Activated CD8-positive, alpha-beta T cell treated with anti-CD3 and anti-CD28 coated beads, Interleukin-2, amount 10 ng/mL, durations not matched to agents 7 days and 5 days (primary cell): ENCODE measurements at regions of chr19 and their contacts with region 1.

Region 1: DNA sequence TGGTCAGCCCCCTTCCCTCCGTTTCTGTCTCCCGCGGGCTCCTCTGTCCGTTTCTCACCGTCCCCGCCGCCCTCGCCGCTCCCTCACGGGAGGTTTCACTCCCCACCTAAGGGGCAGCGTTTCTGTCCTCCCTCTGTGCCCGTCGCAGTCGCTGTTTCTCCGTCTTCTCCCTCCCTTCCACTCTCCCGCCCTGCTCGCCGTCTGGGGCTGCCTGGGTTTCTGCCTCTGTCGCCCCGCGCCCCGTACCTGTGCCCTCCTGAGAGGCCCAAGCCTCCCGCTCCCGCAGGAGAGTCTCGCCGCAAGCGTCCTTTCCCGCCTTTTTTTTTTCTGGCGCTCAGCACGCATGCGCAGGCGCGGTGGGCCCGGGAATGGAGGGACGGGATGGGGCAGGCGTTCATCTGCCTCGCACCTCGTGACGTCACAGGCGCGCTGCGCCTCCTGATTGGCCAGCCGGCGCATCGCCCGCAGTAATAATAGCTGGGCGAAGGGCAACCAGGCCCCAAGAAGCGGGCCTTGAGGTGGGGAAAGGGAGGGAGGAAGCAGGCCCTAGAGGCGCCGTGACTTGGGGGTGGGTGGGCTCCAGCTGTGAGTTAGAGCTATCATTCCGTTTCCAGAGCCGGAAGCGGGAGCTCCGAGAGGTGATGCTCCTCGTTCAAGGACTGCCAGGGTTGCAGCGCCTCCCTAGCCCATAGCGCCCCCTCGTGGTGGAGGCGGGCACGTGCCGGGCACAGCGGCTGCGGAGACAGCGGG is 15.4 kb downstream of the SSC5D start:
- DNase-seq: peak; percentile 93
- ATAC-seq: peak; percentile 94
- H3K4me3 Mint-ChIP-seq: peak overlapping the region; percentile 70
- H3K27ac Mint-ChIP-seq: peak overlapping the region; percentile 85
- H3K4me1 Mint-ChIP-seq: peaks cover 19% of the 10 kb centered on the region
- H3K27me3 Mint-ChIP-seq: no peaks in the 10 kb centered on the region

Region 2: GRCh38 chr19:55258828-55259539 is 244.7 kb before region 1 on chr19 and contains the start of gene PPP6R1:
- CTCF ChIA-PET with region 1: interaction called, 17 read pairs
- POLR2A ChIA-PET with region 1: no interaction called
- DNase-seq: peak; percentile 95
- ATAC-seq: peak; percentile 76
- H3K4me3 Mint-ChIP-seq: peak within 1 kb of the TSS; percentile 91
- H3K27ac Mint-ChIP-seq: peak within 1 kb of the TSS; percentile 100
- H3K4me1 Mint-ChIP-seq: peaks cover 26% of the 10 kb centered on the region
- H3K27me3 Mint-ChIP-seq: no peaks in the 10 kb centered on the region
- total RNA-seq, gene PPP6R1: 256 to 265 TPM

Region 3: DNA sequence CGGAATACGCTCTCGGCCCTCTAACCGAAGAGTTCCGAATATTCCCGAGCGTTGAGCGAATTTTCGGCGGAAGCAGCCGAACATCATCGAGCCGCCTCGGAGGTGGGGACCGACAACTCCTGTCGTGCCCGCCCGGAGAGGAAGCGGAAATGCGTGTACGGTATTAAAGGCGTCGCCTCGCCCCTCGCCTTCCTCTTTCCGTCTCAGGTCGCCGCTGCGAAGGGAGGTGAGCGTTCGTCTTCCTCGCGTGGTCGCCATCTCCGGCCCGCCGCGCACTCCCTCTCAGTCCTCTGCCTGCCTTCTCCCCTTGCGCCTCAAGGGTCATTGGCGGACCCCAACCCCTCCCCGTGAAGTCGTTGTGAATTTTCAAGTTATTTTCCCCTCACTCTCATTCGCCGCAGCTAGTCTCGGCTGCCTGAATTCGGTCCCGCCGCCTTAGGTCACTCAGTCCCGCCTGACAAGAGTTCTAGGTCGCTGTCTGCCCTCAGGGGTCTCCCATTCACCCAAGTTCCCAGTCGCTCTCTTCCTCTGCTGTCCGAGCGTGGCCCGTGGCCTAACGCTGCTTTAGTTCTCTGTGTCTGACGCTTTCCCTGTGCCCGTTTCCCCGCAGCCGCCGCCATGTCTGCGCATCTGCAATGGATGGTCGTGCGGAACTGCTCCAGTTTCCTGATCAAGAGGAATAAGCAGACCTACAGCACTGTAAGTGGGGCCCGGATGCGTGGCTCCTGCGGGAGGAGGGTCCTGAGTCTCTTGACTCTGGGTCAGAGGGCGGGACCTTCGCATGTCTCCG is 117.7 kb before region 1 on chr19 and contains the start of gene RPL28:
- CTCF ChIA-PET with region 1: interaction called, 13 read pairs
- POLR2A ChIA-PET with region 1: no interaction called
- DNase-seq: peak; percentile 99
- ATAC-seq: peak; percentile 73
- H3K4me3 Mint-ChIP-seq: peak within 1 kb of the TSS; percentile 100
- H3K27ac Mint-ChIP-seq: peak within 1 kb of the TSS; percentile 99
- H3K4me1 Mint-ChIP-seq: peaks cover 68% of the 10 kb centered on the region
- H3K27me3 Mint-ChIP-seq: no peaks in the 10 kb centered on the region
- total RNA-seq, gene RPL28: 2,948 to 3,082 TPM

Region 4: DNA sequence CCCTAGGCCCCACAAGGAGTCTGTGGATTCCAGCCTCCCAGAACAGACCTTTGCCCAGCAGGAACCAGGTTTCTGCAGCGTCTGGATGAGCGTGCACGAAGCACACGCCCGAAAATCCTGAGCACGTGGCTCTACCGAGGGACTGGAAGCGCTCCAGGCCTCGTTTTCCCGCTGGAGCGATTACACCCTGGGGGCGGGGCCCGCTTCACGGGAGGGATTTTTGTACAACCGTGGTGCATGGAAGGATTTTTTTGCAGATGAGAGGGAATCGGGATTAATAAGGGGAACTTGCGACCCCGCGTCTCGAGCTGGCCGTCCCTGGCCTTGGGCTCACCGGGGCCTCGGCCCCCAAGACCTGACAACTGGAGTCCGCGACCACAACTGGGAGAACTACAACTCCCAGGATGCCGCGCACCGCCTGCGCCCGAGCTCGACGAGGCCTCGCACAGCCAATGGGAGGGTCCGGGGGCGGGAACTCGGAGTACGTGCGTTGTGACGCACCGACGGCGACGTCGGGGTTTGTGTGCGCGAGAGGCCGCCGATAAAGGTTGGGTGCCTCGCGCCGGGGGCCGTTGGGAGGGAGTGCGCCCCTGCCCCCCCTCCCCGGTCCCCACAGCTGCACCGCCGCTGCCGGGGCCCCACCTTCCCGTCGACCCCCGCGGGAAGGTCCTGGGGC is 27.4 kb before region 1 on chr19 and contains the start of gene ZNF628:
- CTCF ChIA-PET with region 1: interaction called, 48 read pairs
- POLR2A ChIA-PET with region 1: no interaction called
- DNase-seq: peak; percentile 99
- ATAC-seq: peak; percentile 92
- H3K4me3 Mint-ChIP-seq: peak within 1 kb of the TSS; percentile 91
- H3K27ac Mint-ChIP-seq: peak within 1 kb of the TSS; percentile 94
- H3K4me1 Mint-ChIP-seq: peaks cover 45% of the 10 kb centered on the region
- H3K27me3 Mint-ChIP-seq: no peaks in the 10 kb centered on the region
- total RNA-seq, gene ZNF628: 10.2 to 11.6 TPM

Region 5: DNA sequence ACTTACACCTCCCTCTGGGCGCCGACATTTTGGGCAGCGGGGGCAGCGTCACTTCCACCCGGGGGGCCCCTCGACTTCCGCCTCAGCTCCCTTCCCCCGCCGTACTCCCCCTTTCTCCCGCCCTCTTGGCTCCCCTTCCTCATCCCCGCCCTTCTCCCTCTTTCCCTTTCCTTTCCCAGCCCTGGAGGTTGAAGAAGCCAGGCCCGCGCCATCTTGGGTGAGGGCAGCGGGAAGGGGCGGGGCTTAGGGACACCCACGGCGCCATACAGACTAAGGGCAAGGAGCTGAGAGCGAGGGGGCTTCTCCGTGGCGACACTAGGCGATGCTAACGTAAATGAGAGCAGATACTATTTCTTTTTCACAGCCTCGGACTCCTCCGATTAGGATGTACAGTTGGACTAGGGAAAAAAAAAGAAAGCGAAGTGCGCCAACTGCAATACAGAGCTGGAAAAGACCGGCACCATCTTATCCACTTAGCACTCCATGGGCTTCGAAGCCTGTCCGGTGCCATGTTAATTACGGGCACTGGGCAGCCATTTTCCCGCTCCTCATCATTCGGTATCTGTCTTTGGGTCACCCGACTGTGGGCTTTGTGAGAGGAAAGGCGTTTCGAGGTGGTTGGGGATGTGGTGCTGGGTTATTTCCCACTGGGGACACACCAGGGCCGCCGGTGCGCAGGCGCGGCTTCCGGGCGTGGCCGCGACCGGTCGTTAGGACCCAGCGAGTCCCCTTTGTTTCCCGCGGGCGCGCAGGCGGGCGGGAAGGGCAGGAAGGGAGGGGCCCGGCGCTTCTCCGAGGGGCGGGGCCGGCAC is 96.0 kb after region 1 on chr19 and contains the start of gene FIZ1:
- CTCF ChIA-PET with region 1: interaction called, 12 read pairs
- POLR2A ChIA-PET with region 1: interaction called, 3 read pairs
- DNase-seq: peak; percentile 98
- ATAC-seq: peak; percentile 80
- H3K4me3 Mint-ChIP-seq: peak within 1 kb of the TSS; percentile 97
- H3K27ac Mint-ChIP-seq: peak within 1 kb of the TSS; percentile 100
- H3K4me1 Mint-ChIP-seq: peaks cover 38% of the 10 kb centered on the region
- H3K27me3 Mint-ChIP-seq: no peaks in the 10 kb centered on the region
- total RNA-seq, gene FIZ1: 13.6 to 13.7 TPM

Region 6: DNA sequence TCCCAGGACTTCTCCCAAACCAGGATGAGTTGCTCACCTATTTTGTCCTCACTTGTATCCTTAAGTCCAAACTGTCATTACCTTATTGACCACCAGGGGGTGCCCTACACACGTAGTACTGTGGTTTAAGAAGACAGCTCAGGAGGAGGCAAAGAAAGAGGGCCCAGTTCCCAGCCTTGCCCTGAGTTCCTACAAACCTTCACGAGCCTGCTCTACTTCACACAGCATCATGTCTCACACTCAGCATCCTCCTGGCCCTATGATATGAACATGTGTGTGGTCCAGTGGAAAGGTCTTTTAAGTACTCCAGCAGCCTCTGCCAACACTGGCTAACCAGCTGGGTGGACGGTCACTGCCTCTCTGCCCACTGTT is 128.8 kb after region 1 on chr19:
- CTCF ChIA-PET with region 1: interaction called, 29 read pairs
- POLR2A ChIA-PET with region 1: no interaction called
- DNase-seq: peak; percentile 95
- ATAC-seq: peak; percentile 42
- H3K4me3 Mint-ChIP-seq: no peak overlapping the region
- H3K27ac Mint-ChIP-seq: peak overlapping the region; percentile 56
- H3K4me1 Mint-ChIP-seq: peaks cover 53% of the 10 kb centered on the region
- H3K27me3 Mint-ChIP-seq: peaks cover 9% of the 10 kb centered on the region